ENCODE measurements at regions of chr6 and their contacts with region 1.

Region 1: DNA sequence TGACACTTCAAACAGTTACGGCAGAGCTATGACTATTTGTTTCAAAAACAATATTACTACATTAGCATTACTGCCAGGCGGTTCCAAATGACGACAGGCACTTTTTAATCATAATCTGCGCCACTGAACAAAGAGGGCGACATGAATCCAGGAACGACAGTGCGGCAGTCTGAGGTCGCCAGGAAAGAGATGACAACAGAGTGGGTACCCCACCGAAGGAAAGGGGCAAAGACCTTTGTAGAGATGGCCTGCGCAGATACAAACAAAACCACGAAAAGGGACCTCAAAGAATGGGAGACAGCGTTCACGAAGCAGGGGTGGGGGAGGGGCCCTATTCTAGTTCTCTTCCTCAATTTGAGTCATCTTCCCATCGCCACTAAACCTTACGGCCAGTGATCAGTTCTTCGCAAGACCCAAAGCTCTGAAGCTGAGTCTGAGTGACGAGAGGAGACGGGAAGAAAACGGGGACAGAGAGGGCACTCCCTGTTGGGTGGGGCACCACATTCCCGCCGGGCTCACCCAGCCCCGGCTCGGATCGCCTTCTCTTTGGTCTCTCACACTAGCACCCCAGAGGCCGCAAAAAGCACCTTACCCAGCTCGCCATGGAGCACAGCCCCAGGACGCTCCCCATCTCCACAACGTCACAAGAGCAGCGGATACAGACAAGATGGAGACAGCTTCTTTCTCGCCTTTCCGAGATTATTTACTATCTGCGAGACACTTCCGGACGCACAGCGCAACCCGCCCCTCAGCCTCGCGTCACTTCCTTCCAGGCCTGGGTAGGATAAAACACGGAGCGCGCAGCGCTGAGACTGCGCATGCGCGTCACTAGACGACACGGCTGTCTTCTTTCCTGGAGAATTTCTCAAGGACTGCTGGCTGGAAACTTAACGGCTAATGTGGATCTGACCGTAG is at the start of gene SERINC1:
- DNase-seq: peak; percentile 96
- ATAC-seq: peak; percentile 98
- H3K4me3 Mint-ChIP-seq: peak within 1 kb of the TSS; percentile 94
- H3K27ac Mint-ChIP-seq: peak within 1 kb of the TSS; percentile 98
- H3K4me1 Mint-ChIP-seq: peaks cover 36% of the 10 kb centered on the region
- H3K27me3 Mint-ChIP-seq: no peaks in the 10 kb centered on the region
- CTCF ChIP-seq: no peak
- total RNA-seq, gene SERINC1: 40.2 to 40.5 TPM

Region 2: DNA sequence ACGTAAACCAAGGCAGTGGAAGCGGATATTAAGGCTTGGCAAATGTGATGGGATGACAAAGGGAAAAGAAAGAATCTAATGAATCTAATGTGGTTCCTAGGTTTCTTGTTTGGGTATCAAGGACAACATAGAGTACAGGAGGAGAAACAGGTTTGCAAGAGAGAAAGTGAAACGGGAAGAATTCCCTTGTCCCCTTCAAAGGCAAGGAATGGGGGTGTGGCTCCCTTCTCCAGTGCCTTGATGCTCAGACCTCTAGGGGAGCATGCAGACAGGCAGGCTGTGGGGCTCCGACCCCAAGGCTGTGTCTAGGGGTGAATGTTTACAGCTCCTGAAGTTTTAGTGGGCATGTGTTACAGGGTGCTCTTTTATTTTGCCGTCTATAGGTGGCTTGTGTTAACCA is 389.4 kb before region 1 on chr6:
- CTCF ChIA-PET with region 1: no interaction called
- POLR2A ChIA-PET with region 1: no interaction called
- intact Hi-C with region 1: no loop called
- DNase-seq: no peak
- ATAC-seq: no peak
- H3K4me3 Mint-ChIP-seq: no peak overlapping the region
- H3K27ac Mint-ChIP-seq: no peak overlapping the region
- H3K4me1 Mint-ChIP-seq: no peaks in the 10 kb centered on the region
- H3K27me3 Mint-ChIP-seq: no peaks in the 10 kb centered on the region
- CTCF ChIP-seq: no peak

Region 3: GRCh38 chr6:122246906-122247658 is 224.3 kb before region 1 on chr6:
- CTCF ChIA-PET with region 1: no interaction called
- POLR2A ChIA-PET with region 1: no interaction called
- intact Hi-C with region 1: no loop called
- DNase-seq: no peak
- ATAC-seq: no peak
- H3K4me3 Mint-ChIP-seq: no peak overlapping the region
- H3K27ac Mint-ChIP-seq: no peak overlapping the region
- H3K4me1 Mint-ChIP-seq: no peaks in the 10 kb centered on the region
- H3K27me3 Mint-ChIP-seq: no peaks in the 10 kb centered on the region
- CTCF ChIP-seq: no peak

Region 4: DNA sequence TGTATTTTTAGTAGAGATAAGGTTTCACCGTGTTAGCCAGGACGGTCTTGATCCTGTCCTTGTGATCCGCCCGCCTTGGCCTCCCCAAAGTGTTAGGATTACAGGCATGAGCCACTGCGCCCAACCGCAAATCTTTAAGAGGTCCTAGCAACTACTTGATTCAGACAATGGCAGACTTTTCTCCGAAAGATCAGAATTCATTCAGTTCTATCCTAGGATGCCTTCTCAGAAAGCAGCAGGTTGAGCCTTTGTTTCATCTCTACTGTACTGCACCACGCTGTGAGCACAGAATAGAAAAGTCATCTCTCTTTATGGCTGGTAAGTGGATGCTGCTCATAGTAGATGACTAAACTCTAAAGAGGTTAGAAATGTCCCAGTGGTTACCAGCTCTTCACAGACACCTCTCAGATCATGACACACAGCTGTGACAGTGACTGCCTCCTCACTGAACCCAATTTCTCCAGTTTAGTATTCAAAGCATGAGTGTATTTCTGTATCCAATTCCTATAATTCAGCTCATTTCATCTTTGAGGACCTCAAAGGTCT is 77.9 kb before region 1 on chr6:
- CTCF ChIA-PET with region 1: no interaction called
- POLR2A ChIA-PET with region 1: interaction called, 10 read pairs
- intact Hi-C with region 1: no loop called
- DNase-seq: peak; percentile 21
- ATAC-seq: peak; percentile 97
- H3K4me3 Mint-ChIP-seq: no peak overlapping the region
- H3K27ac Mint-ChIP-seq: no peak overlapping the region
- H3K4me1 Mint-ChIP-seq: peaks cover 13% of the 10 kb centered on the region
- H3K27me3 Mint-ChIP-seq: peaks cover 2% of the 10 kb centered on the region
- CTCF ChIP-seq: no peak

Region 5: DNA sequence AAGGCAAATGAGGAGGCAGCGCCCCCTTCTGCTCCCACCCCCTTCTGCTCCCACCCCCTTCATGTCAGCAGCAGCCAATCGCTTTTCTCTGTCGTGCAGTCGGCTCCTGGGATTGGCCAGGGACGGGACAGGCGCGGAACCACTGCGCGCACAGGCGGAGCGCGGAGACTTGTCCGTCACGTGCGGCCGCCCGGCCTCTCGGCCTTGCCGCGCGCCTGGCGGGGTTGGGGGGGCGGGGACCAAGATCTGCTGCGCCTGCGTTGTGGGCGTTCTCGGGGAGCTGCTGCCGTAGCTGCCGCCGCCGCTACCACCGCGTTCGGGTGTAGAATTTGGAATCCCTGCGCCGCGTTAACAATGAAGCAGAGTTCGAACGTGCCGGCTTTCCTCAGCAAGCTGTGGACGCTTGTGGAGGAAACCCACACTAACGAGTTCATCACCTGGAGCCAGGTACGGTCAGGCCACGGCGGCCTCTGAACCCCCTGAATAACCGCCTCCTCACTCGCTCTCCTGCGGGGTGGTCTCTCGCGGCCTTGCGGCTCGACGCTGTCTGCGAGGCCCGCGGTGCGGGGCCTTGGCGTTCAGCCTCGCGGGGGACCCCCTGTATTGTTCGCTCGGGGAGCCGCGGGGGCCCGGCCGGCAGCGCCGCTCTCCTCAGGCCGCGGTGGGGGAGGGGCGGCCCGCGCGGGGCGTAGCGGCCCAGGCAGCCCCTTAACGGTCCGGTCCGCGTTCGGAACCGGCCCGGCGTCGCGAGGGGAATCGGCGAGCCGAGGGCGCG is 71.8 kb before region 1 on chr6 and contains the start of gene HSF2:
- CTCF ChIA-PET with region 1: no interaction called
- POLR2A ChIA-PET with region 1: interaction called, 10 read pairs
- intact Hi-C with region 1: loop called (anchors 2 kb)
- DNase-seq: peak; percentile 96
- ATAC-seq: peak; percentile 98
- H3K4me3 Mint-ChIP-seq: peak within 1 kb of the TSS; percentile 93
- H3K27ac Mint-ChIP-seq: peak within 1 kb of the TSS; percentile 96
- H3K4me1 Mint-ChIP-seq: peaks cover 39% of the 10 kb centered on the region
- H3K27me3 Mint-ChIP-seq: no peaks in the 10 kb centered on the region
- CTCF ChIP-seq: no peak
- total RNA-seq, gene HSF2: 19.5 to 22.4 TPM

Region 6: DNA sequence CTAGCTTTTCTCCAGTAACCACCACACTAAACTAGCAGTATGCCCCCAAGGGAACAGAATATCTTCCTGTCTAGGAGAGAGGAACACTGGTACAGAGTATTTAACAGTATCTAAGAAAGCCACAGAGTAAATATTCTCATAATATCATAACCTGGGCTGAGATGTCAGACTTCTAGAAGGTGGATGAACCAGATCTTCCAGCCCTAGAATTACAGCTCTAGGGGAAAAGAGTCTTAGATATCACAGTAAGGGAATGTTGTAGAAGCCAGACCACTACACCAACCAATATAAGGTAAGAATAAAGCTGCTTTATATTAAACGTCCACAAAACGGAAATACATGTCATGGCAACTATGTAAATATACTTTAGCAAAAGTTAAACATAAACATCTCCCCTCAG is 12.2 kb before region 1 on chr6:
- CTCF ChIA-PET with region 1: interaction called, 7 read pairs
- POLR2A ChIA-PET with region 1: interaction called, 19 read pairs
- intact Hi-C with region 1: no loop called
- DNase-seq: no peak
- ATAC-seq: no peak
- H3K4me3 Mint-ChIP-seq: no peak overlapping the region
- H3K27ac Mint-ChIP-seq: peak overlapping the region; percentile 89
- H3K4me1 Mint-ChIP-seq: peaks cover 77% of the 10 kb centered on the region
- H3K27me3 Mint-ChIP-seq: no peaks in the 10 kb centered on the region
- CTCF ChIP-seq: no peak

Measured in activated CD8-positive, alpha-beta T cell treated with anti-CD3 and anti-CD28 coated beads for 36 hours (primary cell).